ENCODE measurements at regions of chr4 and their contacts with region 1.

Region 1: GRCh38 chr4:48047421-48047844 is 30.9 kb downstream of the NIPAL1 start:
- DNase-seq: peak in 8 of 9 experiments; percentile 49 to 76 (median 64)
- ATAC-seq: peak; percentile 80
- H3K4me3 ChIP-seq: peak overlapping the region in 1 of 2 experiments; percentile 12
- H3K4me3 Mint-ChIP-seq: peak overlapping the region; percentile 53
- H3K27ac ChIP-seq: no peak overlapping the region
- H3K27ac Mint-ChIP-seq: no peak overlapping the region
- H3K4me1 ChIP-seq: peaks cover 34% of the 10 kb centered on the region
- H3K4me1 Mint-ChIP-seq: peaks cover 51% of the 10 kb centered on the region
- H3K27me3 ChIP-seq: no peaks in the 10 kb centered on the region
- H3K27me3 Mint-ChIP-seq: no peaks in the 10 kb centered on the region
- CTCF ChIP-seq: no peak

Region 2: GRCh38 chr4:47577779-47578553 is 469.5 kb before region 1 on chr4:
- CTCF ChIA-PET with region 1: no interaction called
- POLR2A ChIA-PET with region 1: no interaction called
- intact Hi-C with region 1: no loop called
- DNase-seq: no peak
- ATAC-seq: no peak
- H3K4me3 ChIP-seq: no peak overlapping the region
- H3K4me3 Mint-ChIP-seq: no peak overlapping the region
- H3K27ac ChIP-seq: no peak overlapping the region
- H3K27ac Mint-ChIP-seq: no peak overlapping the region
- H3K4me1 ChIP-seq: no peaks in the 10 kb centered on the region
- H3K4me1 Mint-ChIP-seq: no peaks in the 10 kb centered on the region
- H3K27me3 ChIP-seq: no peaks in the 10 kb centered on the region
- H3K27me3 Mint-ChIP-seq: no peaks in the 10 kb centered on the region
- CTCF ChIP-seq: no peak

Region 3: DNA sequence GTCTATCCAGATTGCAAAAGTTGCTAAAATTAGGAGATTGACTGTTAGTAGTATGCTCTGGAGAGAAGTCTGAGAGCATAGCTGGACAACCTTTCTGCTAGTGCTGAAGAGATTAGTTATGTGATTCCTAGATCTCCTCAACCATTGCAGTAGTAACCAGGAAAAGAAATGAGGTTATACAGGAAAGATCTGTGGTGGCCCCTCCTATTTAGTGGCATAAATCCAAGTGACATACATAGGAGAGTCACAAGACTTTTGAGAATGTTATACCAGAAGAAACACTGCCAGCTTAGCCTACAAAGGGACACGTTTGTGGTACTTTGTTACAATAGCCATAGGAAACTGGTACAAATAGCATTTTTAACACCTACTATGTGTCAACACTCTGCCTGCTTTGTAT is 457.1 kb before region 1 on chr4:
- CTCF ChIA-PET with region 1: no interaction called
- POLR2A ChIA-PET with region 1: no interaction called
- intact Hi-C with region 1: no loop called
- DNase-seq: no peak
- ATAC-seq: no peak
- H3K4me3 ChIP-seq: no peak overlapping the region
- H3K4me3 Mint-ChIP-seq: no peak overlapping the region
- H3K27ac ChIP-seq: no peak overlapping the region
- H3K27ac Mint-ChIP-seq: no peak overlapping the region
- H3K4me1 ChIP-seq: no peaks in the 10 kb centered on the region
- H3K4me1 Mint-ChIP-seq: no peaks in the 10 kb centered on the region
- H3K27me3 ChIP-seq: no peaks in the 10 kb centered on the region
- H3K27me3 Mint-ChIP-seq: no peaks in the 10 kb centered on the region
- CTCF ChIP-seq: no peak

Region 4: DNA sequence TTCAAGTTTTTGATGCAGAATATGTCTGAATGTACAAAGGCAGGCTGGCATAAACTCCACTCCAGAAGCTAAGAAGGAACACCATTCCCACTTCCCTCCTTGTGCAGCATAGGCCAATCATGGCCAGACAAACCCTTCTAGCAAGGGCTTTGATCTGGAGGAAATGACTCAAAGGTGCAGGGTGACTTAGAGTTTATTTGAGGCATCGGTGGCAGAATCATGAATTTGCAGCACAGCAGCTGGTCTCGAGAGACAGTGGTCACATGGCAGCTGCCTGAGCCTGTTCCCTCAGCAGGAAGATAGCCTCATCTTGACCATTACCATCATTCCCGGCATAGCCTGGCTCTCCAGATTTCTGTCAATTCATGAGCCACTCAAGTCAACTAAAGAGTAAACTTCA is 407.9 kb before region 1 on chr4:
- CTCF ChIA-PET with region 1: no interaction called
- POLR2A ChIA-PET with region 1: no interaction called
- intact Hi-C with region 1: no loop called
- DNase-seq: no peak
- ATAC-seq: no peak
- H3K4me3 ChIP-seq: no peak overlapping the region
- H3K4me3 Mint-ChIP-seq: no peak overlapping the region
- H3K27ac ChIP-seq: no peak overlapping the region
- H3K27ac Mint-ChIP-seq: no peak overlapping the region
- H3K4me1 ChIP-seq: no peaks in the 10 kb centered on the region
- H3K4me1 Mint-ChIP-seq: no peaks in the 10 kb centered on the region
- H3K27me3 ChIP-seq: no peaks in the 10 kb centered on the region
- H3K27me3 Mint-ChIP-seq: peaks cover 11% of the 10 kb centered on the region
- CTCF ChIP-seq: no peak

Region 5: DNA sequence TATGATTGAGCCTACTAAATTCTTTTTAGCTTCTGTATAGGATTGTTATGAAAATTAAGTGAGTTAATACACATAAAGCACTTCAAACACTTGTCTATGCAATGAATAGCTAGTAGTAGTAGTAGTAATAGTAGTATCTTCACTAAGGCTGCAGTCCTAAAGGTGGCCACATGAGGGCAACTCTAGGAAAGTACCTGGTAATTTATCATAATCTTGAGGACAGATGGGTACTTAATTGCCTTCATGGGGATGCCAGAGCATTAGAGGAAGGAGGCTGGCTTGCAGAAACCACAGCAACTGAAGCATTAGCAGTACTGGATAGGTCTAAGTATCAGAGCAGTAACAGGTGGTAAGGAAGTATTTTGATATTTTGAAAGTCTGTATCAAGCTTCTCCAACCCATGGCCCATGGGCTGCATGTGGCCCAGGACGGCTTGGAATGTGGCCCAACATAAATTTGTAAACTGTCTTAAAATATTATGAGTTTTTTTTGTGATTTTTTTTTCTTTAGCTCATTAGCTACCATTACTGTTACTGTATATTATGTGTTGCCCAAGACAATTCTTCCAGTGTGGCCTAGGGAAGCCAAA is 13.5 kb before region 1 on chr4:
- CTCF ChIA-PET with region 1: interaction called, 19 read pairs
- POLR2A ChIA-PET with region 1: interaction called, 6 read pairs
- intact Hi-C with region 1: loop called in 1 of 2 experiments (anchors 1 kb)
- DNase-seq: peak; percentile 36 to 76 (median 66)
- ATAC-seq: peak; percentile 96
- H3K4me3 ChIP-seq: no peak overlapping the region
- H3K4me3 Mint-ChIP-seq: no peak overlapping the region
- H3K27ac ChIP-seq: no peak overlapping the region
- H3K27ac Mint-ChIP-seq: no peak overlapping the region
- H3K4me1 ChIP-seq: no peaks in the 10 kb centered on the region
- H3K4me1 Mint-ChIP-seq: peaks cover 4% of the 10 kb centered on the region
- H3K27me3 ChIP-seq: no peaks in the 10 kb centered on the region
- H3K27me3 Mint-ChIP-seq: no peaks in the 10 kb centered on the region
- CTCF ChIP-seq: peak; percentile 82

Region 6: DNA sequence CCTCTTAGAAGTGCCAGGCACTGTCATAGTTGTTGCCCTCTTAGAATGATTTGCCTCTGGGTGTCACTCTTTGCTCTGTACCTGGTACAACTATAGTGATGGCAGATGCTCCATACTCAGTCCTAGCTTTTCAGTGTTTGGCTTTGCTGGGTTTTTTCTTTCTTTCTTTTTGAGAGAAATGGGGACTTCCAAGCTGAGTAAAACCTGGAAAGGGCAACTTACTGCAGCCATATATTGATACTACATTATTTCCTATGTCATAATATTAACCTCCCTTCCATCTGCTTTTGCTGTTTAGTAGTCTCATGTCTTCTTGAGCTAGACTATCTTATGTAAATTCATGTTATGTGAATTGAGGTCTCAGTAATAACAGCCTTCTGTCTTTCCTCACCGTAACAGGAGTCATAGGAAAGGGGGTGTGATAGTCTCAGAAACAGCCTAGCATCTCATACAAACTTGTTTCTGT is 18.2 kb after region 1 on chr4:
- CTCF ChIA-PET with region 1: interaction called, 3 read pairs
- POLR2A ChIA-PET with region 1: interaction called, 5 read pairs
- intact Hi-C with region 1: loop called in 1 of 2 experiments (anchors 2 kb)
- DNase-seq: no peak
- ATAC-seq: no peak
- H3K4me3 ChIP-seq: no peak overlapping the region
- H3K4me3 Mint-ChIP-seq: no peak overlapping the region
- H3K27ac ChIP-seq: no peak overlapping the region
- H3K27ac Mint-ChIP-seq: no peak overlapping the region
- H3K4me1 ChIP-seq: no peaks in the 10 kb centered on the region
- H3K4me1 Mint-ChIP-seq: peaks cover 16% of the 10 kb centered on the region
- H3K27me3 ChIP-seq: no peaks in the 10 kb centered on the region
- H3K27me3 Mint-ChIP-seq: no peaks in the 10 kb centered on the region
- CTCF ChIP-seq: no peak

Region 7: DNA sequence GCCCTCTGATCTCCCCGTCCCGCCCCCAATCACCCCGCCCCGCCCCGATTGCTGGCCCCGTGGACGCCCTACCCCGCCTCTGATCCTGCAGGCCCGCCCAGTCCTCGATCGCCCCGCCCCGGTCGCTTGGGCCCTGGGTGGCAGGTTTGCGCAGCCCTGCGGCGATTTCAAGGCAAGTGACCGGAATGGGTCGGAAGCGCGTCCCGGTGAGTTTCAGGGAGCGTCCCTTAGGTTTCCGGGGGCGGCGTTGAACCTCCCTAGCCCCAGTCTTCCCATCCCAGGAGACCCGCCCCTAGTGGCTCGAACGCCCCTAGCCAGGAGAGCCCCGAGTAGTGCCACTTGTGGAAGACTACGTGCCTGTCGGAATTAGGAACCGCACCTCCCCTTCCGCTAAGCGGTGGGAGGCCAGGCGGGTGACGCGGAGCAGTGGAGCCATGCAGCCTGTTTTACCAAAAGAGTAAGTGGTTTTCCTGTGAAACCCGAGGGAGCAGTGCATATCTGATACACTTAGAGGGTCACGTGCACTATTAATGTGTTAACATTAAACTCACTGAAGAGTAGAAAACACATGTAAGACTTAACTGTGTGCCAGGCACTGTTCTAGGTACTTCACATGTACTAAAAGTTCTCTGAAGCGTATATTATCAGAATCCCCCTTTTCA is 222.6 kb after region 1 on chr4:
- CTCF ChIA-PET with region 1: no interaction called
- POLR2A ChIA-PET with region 1: no interaction called
- intact Hi-C with region 1: loop called in 1 of 2 experiments (anchors 5 kb)
- DNase-seq: peak; percentile 74 to 89 (median 85)
- ATAC-seq: peak; percentile 88
- H3K4me3 ChIP-seq: peak overlapping the region; percentile 68 to 98
- H3K4me3 Mint-ChIP-seq: peak overlapping the region; percentile 96
- H3K27ac ChIP-seq: peak overlapping the region; percentile 47 to 60
- H3K27ac Mint-ChIP-seq: peak overlapping the region; percentile 80
- H3K4me1 ChIP-seq: peaks cover 12% of the 10 kb centered on the region
- H3K4me1 Mint-ChIP-seq: peaks cover 18% of the 10 kb centered on the region
- H3K27me3 ChIP-seq: no peaks in the 10 kb centered on the region
- H3K27me3 Mint-ChIP-seq: no peaks in the 10 kb centered on the region
- CTCF ChIP-seq: no peak